Calu3 (cell line): ENCODE measurements at regions of chr20 and their contacts with region 1.

Region 1: DNA sequence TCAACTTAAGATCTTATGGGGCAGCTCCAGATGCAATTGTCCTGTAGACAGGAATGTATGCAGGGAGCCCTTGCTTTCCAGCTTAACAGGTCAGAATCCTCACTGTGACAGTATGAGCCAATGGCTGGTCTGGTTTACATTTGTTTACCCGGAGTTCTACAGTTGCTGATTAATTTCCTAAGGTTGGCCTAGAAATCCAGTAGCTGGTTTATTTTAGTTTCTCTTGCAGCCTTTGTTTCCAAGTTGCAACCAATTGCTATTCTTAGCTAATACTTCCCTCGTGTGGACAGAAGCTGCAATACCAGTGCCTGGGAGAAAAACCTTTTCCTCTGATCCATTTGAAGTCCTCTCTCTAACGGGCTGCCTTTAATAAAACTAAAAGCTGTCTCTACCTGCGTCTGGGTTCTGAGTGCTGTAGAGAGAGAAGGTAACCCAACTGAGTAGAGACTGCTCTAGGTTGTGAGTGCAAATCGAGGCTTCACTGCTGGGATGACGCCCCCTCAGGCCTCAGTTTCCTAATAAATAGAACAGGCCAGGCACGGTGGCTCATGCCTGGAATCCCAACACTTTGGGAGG is 45.9 kb downstream of the ZNF217 start:
- DNase-seq: peak; percentile 62
- H3K4me3 Mint-ChIP-seq: no peak overlapping the region
- H3K27ac Mint-ChIP-seq: no peak overlapping the region
- H3K4me1 Mint-ChIP-seq: no peaks in the 10 kb centered on the region
- H3K27me3 Mint-ChIP-seq: no peaks in the 10 kb centered on the region
- CTCF ChIP-seq: peak; percentile 91

Region 2: DNA sequence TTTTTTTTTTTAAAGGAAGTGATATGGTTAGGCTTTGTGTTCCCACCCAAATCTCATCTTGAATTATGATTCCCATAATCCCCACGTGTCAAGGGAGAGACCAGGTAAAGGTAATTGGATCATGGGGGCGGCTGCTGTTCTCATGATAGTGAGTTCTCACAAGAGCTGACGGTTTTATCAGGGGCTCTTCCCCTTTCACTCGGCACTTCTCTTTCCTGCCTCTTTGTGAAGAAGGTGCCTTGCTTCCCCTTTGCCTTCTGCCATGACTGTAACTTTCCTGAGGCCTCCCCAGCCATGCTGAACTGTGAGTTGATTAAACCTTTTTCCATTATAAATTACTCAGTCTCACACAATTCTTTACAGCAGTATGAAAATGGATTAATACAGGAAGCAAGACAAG is 1420.4 kb before region 1 on chr20:
- CTCF ChIA-PET with region 1: interaction called, 3 read pairs
- intact Hi-C with region 1: loop called (anchors 10 kb)
- DNase-seq: no peak
- H3K4me3 Mint-ChIP-seq: no peak overlapping the region
- H3K27ac Mint-ChIP-seq: no peak overlapping the region
- H3K4me1 Mint-ChIP-seq: no peaks in the 10 kb centered on the region
- H3K27me3 Mint-ChIP-seq: no peaks in the 10 kb centered on the region
- CTCF ChIP-seq: no peak

Region 3: GRCh38 chr20:52242237-52243230 is 1305.2 kb before region 1 on chr20:
- CTCF ChIA-PET with region 1: no interaction called
- intact Hi-C with region 1: loop called (anchors 5 kb)
- DNase-seq: no peak
- H3K4me3 Mint-ChIP-seq: no peak overlapping the region
- H3K27ac Mint-ChIP-seq: no peak overlapping the region
- H3K4me1 Mint-ChIP-seq: no peaks in the 10 kb centered on the region
- H3K27me3 Mint-ChIP-seq: no peaks in the 10 kb centered on the region
- CTCF ChIP-seq: peak; percentile 73

Region 4: GRCh38 chr20:52312132-52312729 is 1235.5 kb before region 1 on chr20:
- CTCF ChIA-PET with region 1: interaction called, 9 read pairs
- intact Hi-C with region 1: loop called (anchors 5 kb)
- DNase-seq: peak; percentile 67
- H3K4me3 Mint-ChIP-seq: no peak overlapping the region
- H3K27ac Mint-ChIP-seq: no peak overlapping the region
- H3K4me1 Mint-ChIP-seq: no peaks in the 10 kb centered on the region
- H3K27me3 Mint-ChIP-seq: peaks cover 74% of the 10 kb centered on the region
- CTCF ChIP-seq: peak; percentile 67

Region 5: DNA sequence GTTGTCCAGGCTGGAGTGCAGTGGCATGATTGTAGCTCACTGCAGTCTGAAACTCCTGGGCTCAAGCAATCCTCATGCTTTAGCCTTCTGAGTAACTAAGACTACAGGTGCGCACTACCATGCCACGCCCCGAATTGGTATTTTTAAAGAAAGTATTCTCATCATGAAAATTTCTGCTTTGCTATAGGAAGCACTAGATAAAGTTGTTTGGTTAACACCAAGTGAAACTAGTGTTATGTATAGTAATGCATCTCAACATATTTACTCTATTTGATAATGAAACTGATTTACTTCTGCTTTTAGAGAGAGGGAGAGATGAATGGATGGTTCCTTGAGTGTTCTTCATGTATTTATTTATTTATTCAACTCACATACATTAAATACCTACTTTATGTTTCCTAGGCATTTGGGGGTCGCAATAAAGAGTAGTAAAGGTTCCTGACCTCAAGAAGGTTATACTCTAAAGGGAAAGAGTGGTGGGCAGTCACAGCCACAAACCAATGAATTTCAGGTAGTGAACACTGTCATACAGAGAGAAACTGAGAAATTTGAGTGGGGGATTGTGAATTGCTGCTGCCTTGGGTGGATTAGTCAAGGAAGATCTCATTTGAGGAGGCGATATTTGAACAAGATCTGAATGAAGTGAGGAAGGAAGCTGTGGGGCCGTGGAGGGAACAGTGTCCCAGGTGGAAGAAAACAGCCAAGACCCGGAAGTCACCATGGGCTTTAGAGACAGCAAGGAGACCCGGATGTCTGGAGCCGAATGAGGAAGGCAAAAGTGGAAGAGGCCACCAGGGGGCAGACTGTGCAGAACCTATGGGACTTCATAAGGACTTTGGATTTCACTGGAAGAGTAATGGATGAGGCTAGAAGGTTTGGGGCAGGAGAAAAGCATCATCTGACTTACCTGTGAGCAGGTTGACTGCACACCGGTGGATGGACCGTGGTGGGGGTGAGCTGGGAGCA is 390.0 kb before region 1 on chr20:
- CTCF ChIA-PET with region 1: interaction called, 7 read pairs
- intact Hi-C with region 1: loop called (anchors 1 kb)
- DNase-seq: peak; percentile 75
- H3K4me3 Mint-ChIP-seq: no peak overlapping the region
- H3K27ac Mint-ChIP-seq: no peak overlapping the region
- H3K4me1 Mint-ChIP-seq: peaks cover 7% of the 10 kb centered on the region
- H3K27me3 Mint-ChIP-seq: peaks cover 11% of the 10 kb centered on the region
- CTCF ChIP-seq: peak; percentile 71

Region 6: GRCh38 chr20:53227523-53227922 is 320.2 kb before region 1 on chr20:
- CTCF ChIA-PET with region 1: interaction called, 6 read pairs
- intact Hi-C with region 1: loop called (anchors 5 kb)
- DNase-seq: no peak
- H3K4me3 Mint-ChIP-seq: no peak overlapping the region
- H3K27ac Mint-ChIP-seq: no peak overlapping the region
- H3K4me1 Mint-ChIP-seq: peaks cover 12% of the 10 kb centered on the region
- H3K27me3 Mint-ChIP-seq: peaks cover 28% of the 10 kb centered on the region
- CTCF ChIP-seq: no peak

Region 7: DNA sequence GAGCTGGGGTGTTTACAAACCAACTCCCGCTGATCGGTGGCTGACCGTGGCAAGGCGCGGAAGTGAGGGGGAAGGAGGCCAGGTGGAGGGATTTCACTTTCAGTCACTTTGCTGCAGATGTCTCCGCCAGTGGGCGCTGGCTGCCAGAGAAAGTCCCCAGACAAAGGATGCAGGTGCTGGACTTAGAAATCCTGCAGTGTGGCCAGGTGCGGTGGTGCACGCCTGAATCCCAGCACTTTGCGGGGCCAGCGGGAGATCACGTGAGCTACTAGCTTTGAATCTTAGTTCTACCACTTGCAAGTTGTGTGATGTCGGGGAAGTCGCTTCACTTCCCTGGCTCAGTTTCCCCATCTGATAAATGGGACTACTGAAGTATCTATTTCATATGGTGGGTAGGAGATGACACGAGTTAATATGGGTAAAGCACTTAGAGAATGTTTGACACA is 134.5 kb before region 1 on chr20:
- CTCF ChIA-PET with region 1: interaction called, 23 read pairs
- intact Hi-C with region 1: loop called (anchors 1 kb)
- DNase-seq: peak; percentile 74
- H3K4me3 Mint-ChIP-seq: no peak overlapping the region
- H3K27ac Mint-ChIP-seq: no peak overlapping the region
- H3K4me1 Mint-ChIP-seq: no peaks in the 10 kb centered on the region
- H3K27me3 Mint-ChIP-seq: peaks cover 53% of the 10 kb centered on the region
- CTCF ChIP-seq: peak; percentile 54